HEK293T (cell line): ENCODE measurements at regions of chr5 and their contacts with region 1.

Region 1: DNA sequence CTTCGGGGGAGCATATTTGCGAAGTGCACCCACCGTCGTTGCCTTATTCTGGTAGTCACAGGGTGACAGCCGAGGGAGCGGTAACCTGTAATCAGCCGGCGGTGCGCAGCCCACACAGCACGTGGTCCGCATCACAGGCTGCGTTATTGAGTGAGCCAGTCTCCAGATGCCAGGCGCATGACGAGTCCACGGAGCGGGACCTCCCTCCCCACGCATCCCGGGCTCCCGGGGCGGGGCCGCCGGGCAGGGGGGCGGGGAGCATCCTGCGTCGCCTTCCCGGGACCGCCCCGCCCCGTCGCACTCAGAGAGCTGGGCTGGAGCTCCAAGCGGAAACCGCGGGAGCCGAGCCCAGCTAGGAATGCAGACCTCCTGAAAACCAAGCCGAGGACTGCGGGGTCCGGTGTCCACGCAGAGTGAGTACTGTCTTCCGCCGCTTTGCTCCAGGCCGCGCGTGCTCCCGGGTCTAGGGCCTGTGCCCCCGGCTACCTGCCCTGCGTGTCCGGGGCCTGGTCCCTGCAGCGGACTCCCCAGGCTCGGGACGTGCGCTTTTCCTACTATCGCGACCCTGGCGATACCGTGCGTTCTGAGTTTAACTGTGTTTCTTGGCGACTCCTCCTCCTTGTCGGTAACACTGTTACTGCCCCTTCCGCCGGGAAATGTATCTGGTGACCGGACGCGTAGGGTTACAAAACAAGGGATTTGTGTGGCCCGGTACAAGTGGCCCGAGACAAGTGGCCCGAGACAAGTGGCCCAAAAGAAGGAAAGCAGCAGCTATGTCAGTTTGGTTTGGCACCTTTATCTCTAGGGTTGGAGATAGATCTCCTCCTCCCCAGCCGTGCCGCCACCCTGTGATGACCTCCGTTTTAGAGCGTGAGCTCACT is 40.6 kb downstream of the CAST start:
- DNase-seq: peak; percentile 87

Region 2: DNA sequence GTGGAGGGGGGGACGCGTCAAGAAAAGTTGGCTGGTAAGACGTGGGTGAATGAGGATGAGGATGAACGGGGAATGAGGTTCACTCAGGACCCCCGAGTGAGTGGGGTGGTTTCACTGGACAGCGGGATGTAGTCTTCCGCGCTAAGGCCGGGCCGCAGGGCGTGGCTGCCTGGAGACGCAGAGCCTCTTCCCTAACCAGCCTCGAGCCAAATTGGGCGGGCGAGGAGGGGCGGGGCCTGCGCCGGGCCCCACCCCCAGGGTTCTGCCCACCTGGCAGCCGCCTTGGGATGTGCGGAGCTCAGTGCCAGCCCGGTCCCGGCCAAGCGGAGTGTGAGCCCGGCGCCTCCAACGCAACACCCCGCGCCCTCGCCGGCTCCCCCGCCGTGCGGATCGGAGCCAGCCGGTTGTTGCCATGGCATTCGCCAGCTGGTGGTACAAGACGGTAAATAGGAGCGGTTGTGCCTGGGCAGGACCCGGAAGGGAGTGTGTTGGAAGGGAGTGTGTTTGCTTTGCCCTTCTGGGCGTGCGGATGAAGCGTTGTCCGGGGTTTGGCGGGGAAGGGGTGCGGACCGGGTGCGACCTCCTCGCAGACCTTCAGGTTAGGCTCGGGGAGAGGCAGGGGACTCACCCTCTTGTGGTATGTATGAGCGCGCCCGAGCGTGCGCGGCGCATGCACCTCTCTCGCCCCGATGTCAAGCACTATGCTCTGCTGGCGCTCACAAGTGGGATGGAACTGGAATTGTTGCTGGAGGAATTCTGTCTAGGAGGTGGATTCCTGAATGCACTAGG is 39.8 kb before region 1 on chr5:
- CTCF ChIA-PET with region 1: no interaction called
- POLR2A ChIA-PET with region 1: interaction called, 18 read pairs
- DNase-seq: peak; percentile 83

Region 3: GRCh38 chr5:96687812-96688453 is 14.8 kb before region 1 on chr5:
- CTCF ChIA-PET with region 1: interaction called, 19 read pairs
- POLR2A ChIA-PET with region 1: interaction called, 5 read pairs
- DNase-seq: peak; percentile 53

Region 4: DNA sequence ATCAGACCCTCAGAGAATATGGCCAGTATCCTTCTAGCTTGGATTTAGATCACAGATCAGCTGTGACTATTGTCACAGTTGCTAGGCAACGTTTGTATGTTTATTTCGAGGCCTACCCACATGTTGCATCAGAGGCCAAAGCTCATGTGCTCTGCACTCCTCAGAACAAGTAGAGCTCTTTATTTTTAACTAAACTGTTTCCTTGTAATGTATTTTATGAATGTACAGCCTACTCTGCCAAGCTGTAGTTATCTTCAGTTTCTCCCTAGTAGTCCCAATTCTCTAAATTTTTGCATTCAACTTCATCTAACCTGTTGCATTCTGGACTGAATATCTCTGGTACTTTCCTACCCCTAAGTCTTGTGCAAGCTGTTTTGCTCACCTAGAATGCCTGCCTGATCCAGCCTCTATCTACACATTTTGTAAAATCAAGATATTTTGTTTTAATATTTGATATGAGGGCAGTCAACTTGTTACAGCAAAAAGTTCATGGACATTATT is 12.3 kb after region 1 on chr5:
- CTCF ChIA-PET with region 1: interaction called, 4 read pairs
- POLR2A ChIA-PET with region 1: interaction called, 23 read pairs
- DNase-seq: no peak

Region 5: DNA sequence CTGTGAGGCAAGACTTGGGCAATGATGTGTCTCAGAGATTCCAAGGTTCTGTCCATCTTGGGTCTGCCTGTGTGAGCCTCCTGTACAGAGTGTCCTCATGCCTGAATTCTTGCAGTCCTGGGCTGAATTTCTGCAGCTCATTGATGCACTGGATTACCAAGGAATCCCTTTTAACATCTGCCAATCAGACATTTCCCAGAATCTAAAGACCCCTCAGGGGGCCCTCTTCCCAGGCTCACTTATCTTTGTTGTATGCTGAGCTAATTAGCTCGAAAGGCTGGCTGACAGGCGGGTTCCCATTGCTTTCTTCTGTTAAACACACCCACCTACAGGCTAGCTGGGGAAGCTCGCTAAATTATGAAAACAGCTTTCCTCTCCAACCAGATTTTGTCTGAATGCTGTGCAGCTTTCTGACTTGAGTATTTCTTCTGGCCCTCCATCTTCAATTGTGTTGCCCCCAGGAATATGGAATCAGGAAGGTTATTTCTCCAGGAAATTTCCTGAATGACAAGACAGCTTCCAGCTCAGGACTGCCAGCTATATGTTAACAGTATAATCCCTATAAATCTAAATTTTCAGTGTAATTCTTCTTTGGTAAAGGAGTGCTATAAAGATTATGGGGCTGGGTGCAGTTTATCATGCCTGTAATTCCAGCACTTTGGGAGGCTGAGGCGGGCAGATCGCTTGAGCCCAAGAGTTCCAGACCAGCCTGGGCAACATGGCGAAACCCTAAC is 439.9 kb after region 1 on chr5 and contains the start of gene LIX1:
- CTCF ChIA-PET with region 1: no interaction called
- POLR2A ChIA-PET with region 1: no interaction called
- DNase-seq: peak; percentile 68